ENCODE measurements at regions of chr5 and their contacts with region 1.

Region 1: DNA sequence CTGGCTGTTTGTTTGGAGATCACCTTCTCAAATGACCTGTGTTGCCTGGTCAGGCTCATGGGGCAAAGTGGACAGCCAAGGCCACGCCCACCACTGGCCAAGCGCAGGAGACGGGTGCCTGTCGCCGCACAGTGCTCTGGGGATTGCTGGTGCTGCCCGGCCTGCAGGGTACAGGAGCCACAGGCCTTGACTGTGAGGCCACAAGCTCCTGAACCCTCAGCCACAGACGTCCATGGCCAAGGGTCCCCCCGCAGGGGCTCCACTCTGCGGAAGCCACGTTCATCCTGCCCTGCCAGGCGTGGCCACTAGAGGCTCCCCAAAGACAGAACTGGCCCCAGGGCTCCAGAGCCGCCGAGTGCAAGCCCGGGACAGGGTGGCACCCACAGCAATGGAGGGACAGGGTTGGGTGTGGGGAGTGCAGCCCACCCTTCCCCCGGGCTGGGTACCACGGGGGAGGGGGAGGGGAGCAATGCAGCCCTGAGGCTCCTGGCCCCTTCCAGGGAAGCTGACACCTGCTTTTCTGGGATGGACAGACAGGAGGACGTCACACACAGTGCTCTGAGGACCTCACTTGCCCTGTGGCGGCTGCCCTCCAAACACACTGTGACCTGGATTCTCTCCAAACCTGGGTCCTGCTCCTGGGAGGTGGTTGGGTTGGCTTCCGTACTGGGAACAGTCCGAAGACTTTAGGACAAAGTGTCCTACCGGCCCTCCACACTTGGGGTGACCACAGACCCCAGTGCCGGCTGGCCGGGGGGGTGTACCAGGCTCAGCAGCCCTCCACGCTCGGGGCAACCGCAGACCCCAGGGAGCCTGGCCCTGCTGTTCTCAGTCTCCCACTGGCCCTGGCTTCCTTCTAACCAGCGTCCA is 21.5 kb downstream of the TPPP start:
- DNase-seq: peak; percentile 87
- H3K4me3 ChIP-seq: peak overlapping the region in 2 of 4 donors; percentile 11 to 21
- H3K27ac ChIP-seq: peak overlapping the region; percentile 7 to 75 (median 65)
- H3K4me1 ChIP-seq: peaks cover 0 to 75% (median 56%) of the 10 kb centered on the region in 4 donors
- H3K27me3 ChIP-seq: no peaks in the 10 kb centered on the region
- CTCF ChIP-seq: peak; percentile 89 to 96 (median 92)
- EP300 ChIP-seq: no peak
- POLR2A ChIP-seq: no peak

Region 2: GRCh38 chr5:776792-777711 is 105.4 kb after region 1 on chr5:
- intact Hi-C with region 1: loop called (anchors 5 kb)
- DNase-seq: peak; percentile 66
- H3K4me3 ChIP-seq: peak overlapping the region in 3 of 4 donors; percentile 28 to 39 (median 32)
- H3K27ac ChIP-seq: peak overlapping the region in 3 of 4 donors; percentile 1 to 43 (median 15)
- H3K4me1 ChIP-seq: peaks cover 0 to 28% (median 12%) of the 10 kb centered on the region in 4 donors
- H3K27me3 ChIP-seq: no peaks in the 10 kb centered on the region
- CTCF ChIP-seq: no peak
- EP300 ChIP-seq: no peak
- POLR2A ChIP-seq: no peak

Region 3: DNA sequence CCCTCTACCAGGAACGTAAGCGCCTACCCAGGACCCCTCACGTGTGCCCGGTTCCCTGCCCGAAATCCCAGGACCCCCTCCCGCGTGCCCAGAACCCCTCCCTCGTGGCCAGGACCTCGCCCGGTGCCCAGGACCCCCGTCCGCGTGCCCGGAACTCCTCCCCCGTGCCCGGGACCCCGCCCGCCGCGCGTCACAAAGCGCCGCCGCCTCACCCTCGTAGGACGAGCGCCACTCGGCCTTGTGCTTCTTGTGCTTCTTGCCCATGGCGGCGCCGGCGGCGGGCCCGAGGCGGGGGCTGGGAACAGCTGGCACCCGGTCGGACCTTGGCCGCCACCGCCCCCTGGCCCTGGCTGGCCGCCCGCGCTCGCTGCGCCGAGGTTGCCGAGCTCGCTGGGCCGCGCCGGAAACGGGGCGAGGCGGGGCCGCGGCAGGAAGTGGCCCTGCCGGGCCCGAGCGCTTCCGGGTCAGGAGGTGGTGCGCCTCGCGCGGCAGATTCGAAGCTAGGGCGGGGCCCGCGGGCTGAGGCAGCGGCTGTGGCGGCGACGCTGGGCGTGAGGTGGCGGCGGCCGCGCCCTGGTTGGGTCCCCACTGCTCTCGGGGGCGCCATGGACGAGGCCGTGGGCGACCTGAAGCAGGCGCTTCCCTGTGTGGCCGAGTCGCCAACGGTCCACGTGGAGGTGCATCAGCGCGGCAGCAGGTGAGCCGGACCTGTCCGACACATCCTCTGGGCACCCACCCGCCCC is 220.9 kb after region 1 on chr5 and contains the starts of genes BRD9 and TRIP13:
- intact Hi-C with region 1: loop called (anchors 2 kb)
- DNase-seq: peak; percentile 88
- H3K4me3 ChIP-seq: peak within 1 kb of the TSS; percentile 76 to 96 (median 89)
- H3K27ac ChIP-seq: peak within 1 kb of the TSS; percentile 83 to 92 (median 88)
- H3K4me1 ChIP-seq: peaks cover 0 to 26% (median 21%) of the 10 kb centered on the region in 4 donors
- H3K27me3 ChIP-seq: no peaks in the 10 kb centered on the region
- CTCF ChIP-seq: no peak
- EP300 ChIP-seq: no peak
- POLR2A ChIP-seq: no peak
- total RNA-seq, gene BRD9: 21.4 to 38.8 (median 24.6) TPM
- total RNA-seq, gene TRIP13: 0.16 to 0.83 (median 0.54) TPM in 3 of 4 donors, not detected in the other

Region 4: DNA sequence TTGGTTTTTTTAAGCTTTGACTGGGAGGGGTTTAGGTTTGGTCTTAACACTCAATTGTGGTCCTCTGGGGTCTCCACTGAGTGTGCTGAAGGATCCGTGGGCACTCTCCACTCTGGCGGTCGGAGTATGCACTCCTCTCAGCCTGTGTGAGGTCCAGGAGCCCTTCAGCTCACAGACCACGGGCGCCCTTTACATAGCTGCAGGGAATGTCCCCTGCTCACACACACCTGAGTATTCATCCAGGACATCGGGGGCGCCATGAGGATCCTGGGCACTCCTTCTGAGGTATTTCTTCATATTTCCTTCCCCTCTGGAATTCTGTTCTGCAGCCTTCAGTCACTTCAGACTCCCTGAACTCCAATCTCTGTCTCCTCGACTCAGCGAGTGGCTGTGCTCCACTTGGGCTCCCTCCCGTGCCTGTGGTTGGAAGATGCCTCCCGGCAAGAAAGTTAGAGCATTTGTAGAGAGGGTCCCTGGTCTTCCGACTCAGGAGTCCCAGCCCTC is 233.5 kb after region 1 on chr5:
- intact Hi-C with region 1: loop called (anchors 2 kb)
- DNase-seq: no peak
- H3K4me3 ChIP-seq: no peak overlapping the region
- H3K27ac ChIP-seq: no peak overlapping the region
- H3K4me1 ChIP-seq: peaks cover 0 to 4% (median 2%) of the 10 kb centered on the region in 4 donors
- H3K27me3 ChIP-seq: no peaks in the 10 kb centered on the region
- CTCF ChIP-seq: no peak
- EP300 ChIP-seq: no peak
- POLR2A ChIP-seq: no peak

Region 5: GRCh38 chr5:997001-997474 is 325.3 kb after region 1 on chr5:
- intact Hi-C with region 1: no loop called
- DNase-seq: peak; percentile 73
- H3K4me3 ChIP-seq: no peak overlapping the region
- H3K27ac ChIP-seq: peak overlapping the region; percentile 2 to 38 (median 27)
- H3K4me1 ChIP-seq: peaks cover 0 to 25% (median 14%) of the 10 kb centered on the region in 4 donors
- H3K27me3 ChIP-seq: no peaks in the 10 kb centered on the region
- CTCF ChIP-seq: no peak
- EP300 ChIP-seq: no peak
- POLR2A ChIP-seq: no peak

Measured in sigmoid colon (tissue), 7 donors.